ENCODE measurements at regions of chr14 and their contacts with region 1.

Region 1: DNA sequence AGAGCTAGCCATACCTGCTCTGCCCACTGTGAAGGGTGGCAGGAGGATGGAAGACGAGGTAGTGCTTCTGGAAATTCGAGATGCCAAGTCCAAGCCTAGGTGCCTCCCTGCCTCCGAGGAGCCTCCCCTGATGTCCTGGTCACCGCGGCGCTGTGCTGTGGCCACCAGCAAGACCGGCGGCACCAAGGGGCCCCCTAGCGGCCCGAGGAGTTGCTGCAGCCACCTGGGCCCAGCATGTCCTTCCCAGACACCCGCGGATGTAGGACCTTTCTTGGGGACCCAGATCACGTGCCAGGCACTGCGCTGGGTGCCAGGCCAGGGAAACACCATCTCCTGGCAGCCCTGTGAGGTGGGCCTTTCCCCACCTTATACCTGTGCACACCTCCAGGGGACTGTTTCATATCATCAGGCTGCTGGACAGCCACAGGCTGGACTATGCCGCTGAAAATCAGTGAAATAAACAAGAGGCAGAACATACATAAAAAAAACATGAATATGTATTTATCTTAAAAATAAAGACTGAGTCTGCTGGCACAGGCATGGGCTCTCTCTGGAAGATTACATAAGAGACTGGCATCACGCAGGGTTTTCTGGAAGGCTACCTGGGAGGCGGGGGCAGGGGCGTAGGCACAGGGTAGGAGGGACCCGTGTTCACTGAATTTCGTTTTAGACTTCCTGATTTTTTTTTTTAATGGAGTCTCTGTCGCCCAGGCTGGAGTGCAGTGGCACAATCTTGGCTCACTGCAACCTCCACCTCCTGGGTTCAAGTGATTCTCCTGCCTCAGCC is 15.9 kb upstream of the HHIPL1 start:
- DNase-seq: peak; percentile 51
- H3K4me3 ChIP-seq: no peak overlapping the region
- H3K27ac ChIP-seq: no peak overlapping the region
- H3K4me1 ChIP-seq: peaks cover 26% of the 10 kb centered on the region
- H3K27me3 ChIP-seq: no peaks in the 10 kb centered on the region
- CTCF ChIP-seq: peak; percentile 90 to 99

Region 2: DNA sequence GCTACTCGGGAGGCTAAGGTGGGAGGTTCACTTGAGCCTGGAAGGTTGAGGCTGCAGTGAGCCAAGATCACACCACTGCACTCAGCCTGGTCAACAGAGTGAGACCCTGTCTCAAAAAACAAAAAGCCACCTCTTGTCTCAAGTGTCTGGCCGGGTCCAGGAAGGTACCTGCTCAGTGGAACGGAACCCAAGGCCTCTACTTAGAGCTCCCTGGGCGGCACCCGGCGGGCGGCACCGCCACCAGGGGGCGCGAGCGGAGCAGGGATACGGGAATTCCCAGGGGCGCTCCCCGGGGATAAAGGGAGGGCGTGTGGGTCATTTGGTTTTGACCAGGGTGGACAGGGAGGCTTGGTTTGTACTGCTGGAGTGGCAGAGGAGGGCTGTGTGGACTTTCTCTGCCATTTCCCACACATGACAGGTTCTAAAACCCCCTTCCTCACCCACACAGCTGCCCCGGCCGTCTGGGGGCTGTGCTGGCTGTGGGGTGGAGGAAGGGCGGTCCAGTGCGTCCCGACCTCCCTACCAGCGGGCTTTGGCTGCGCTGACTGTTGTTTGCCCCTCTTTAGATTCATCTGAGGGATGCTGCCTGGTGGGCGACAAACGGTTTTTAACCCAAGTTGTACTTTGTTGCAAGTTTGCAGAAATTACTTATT is 239.7 kb before region 1 on chr14:
- CTCF ChIA-PET with region 1: no interaction called
- dilution Hi-C with region 1: no loop called
- in situ Hi-C with region 1: no loop called
- intact Hi-C with region 1: loop called (anchors 5 kb)
- DNase-seq: peak; percentile 21
- H3K4me3 ChIP-seq: no peak overlapping the region
- H3K27ac ChIP-seq: no peak overlapping the region
- H3K4me1 ChIP-seq: no peaks in the 10 kb centered on the region
- H3K27me3 ChIP-seq: peaks cover 3% of the 10 kb centered on the region
- CTCF ChIP-seq: peak; percentile 56 to 81

Region 3: DNA sequence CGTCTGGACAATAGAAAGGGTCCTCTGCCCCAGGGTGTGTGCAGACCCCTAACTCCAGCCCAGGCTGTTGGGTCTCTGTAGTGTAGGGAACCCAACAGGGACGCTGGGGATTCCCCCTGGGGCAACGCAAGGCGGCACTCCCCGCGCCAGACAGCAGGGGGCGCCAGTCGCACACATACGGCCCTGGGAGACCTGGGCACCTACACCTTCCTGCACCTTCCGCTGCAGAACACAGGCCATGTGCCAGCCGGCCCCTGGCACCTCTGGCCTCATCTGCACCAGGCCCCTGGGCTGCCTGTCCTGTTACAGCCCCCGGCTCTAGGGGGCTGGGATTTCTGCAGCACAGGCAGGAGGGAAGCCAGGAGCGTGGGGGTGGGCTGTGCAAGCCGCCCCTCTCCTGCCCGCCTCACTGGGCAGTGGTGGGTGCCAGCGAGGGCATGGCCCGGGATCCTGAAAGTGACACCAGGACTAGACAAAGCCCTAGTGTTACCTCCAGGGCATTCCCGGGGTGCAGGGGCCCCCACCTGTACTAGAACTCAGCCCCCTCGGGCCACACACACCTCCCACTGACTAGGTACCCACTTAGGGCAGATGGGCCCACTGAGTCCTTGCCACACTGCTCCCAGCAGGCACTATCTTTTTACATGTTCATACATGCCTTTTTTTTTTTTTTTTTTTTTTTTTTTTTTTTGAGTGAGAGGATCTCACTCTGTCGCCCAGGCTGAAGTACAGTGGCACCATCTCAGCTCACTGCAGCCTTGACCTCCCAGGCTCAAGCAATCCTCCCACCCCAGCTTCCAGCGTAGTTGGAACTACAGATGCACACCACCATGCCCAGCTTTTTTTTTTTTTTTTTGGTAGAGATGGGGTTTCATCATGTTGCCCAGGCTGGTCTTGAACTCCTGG is 110.3 kb before region 1 on chr14:
- CTCF ChIA-PET with region 1: no interaction called
- dilution Hi-C with region 1: no loop called
- in situ Hi-C with region 1: loop called in 1 of 2 experiments (anchors 5 kb)
- intact Hi-C with region 1: loop called (anchors 1 kb)
- DNase-seq: peak; percentile 58
- H3K4me3 ChIP-seq: no peak overlapping the region
- H3K27ac ChIP-seq: no peak overlapping the region
- H3K4me1 ChIP-seq: peaks cover 4% of the 10 kb centered on the region
- H3K27me3 ChIP-seq: no peaks in the 10 kb centered on the region
- CTCF ChIP-seq: peak; percentile 95 to 96

Region 4: DNA sequence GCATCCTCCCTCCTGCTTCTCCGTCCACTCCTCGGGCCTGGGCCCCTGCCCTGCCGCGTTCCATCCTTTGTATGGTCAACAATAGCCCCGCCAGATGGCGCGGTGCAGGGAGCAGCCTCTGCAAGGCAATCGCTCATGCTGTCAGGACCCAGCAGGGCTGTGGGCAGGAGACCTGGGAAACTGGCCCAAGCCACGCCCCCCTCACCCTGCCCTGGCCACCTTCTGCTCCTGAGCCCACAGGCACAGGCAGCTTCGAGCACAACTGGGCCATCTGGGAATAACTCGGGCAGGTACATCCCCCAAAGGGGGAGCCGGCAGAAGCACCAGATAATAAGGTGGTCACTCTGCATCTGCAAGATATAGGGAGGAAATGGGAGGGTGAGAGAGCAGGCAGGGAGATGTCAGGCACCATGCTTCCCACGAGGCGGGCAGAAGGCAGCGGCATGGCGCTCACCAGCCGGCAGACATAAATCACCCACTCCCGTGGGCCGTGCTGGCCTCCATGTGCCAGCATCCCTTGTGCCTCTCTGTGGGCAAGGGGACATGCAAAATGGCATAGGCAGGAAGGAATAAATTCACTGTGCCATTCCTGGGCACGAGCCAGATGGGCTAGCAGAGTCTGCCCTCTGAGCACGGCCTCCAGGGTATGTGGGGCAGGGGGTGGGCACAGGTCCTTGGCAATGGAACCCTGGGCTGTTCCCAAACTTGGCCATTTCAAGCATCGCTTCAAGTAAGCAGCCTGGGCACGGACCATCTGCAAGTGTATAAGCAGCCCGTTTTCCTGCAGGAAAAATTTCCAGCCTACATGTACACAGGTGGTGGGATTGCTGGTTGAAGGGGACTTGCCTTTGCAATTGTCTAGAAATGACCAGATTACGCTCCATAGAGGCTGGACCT is 65.5 kb before region 1 on chr14:
- CTCF ChIA-PET with region 1: no interaction called
- dilution Hi-C with region 1: no loop called
- in situ Hi-C with region 1: no loop called
- intact Hi-C with region 1: loop called (anchors 1 kb)
- DNase-seq: peak; percentile 47
- H3K4me3 ChIP-seq: no peak overlapping the region
- H3K27ac ChIP-seq: no peak overlapping the region
- H3K4me1 ChIP-seq: peaks cover 34% of the 10 kb centered on the region
- H3K27me3 ChIP-seq: no peaks in the 10 kb centered on the region
- CTCF ChIP-seq: no peak

Region 5: GRCh38 chr14:99579903-99580570 is 49.0 kb before region 1 on chr14:
- CTCF ChIA-PET with region 1: no interaction called
- dilution Hi-C with region 1: no loop called
- in situ Hi-C with region 1: no loop called
- intact Hi-C with region 1: loop called (anchors 1 kb)
- DNase-seq: peak; percentile 63
- H3K4me3 ChIP-seq: peak overlapping the region in 2 of 3 experiments; percentile 12 to 26
- H3K27ac ChIP-seq: peak overlapping the region; percentile 85
- H3K4me1 ChIP-seq: peaks cover 53% of the 10 kb centered on the region
- H3K27me3 ChIP-seq: no peaks in the 10 kb centered on the region
- CTCF ChIP-seq: no peak

Region 6: GRCh38 chr14:99604283-99604765 is 24.7 kb before region 1 on chr14:
- CTCF ChIA-PET with region 1: no interaction called
- dilution Hi-C with region 1: no loop called
- in situ Hi-C with region 1: no loop called
- intact Hi-C with region 1: loop called (anchors 1 kb)
- DNase-seq: peak; percentile 95
- H3K4me3 ChIP-seq: peak overlapping the region; percentile 68 to 89 (median 71)
- H3K27ac ChIP-seq: peak overlapping the region; percentile 77
- H3K4me1 ChIP-seq: peaks cover 36% of the 10 kb centered on the region
- H3K27me3 ChIP-seq: no peaks in the 10 kb centered on the region
- CTCF ChIP-seq: no peak